MCF 10A (cell line): ENCODE measurements at regions of chr15 and their contacts with region 1.

Region 1: GRCh38 chr15:99704444-99704838 is 28.8 kb downstream of the LYSMD4 start:
- DNase-seq: peak; percentile 88
- H3K4me3 Mint-ChIP-seq: no peak overlapping the region
- H3K27ac Mint-ChIP-seq: peak overlapping the region; percentile 84
- H3K4me1 Mint-ChIP-seq: peaks cover 43% of the 10 kb centered on the region
- H3K27me3 Mint-ChIP-seq: no peaks in the 10 kb centered on the region
- CTCF ChIP-seq: peak; percentile 57

Region 2: GRCh38 chr15:99275525-99276128 is 428.8 kb before region 1 on chr15:
- CTCF ChIA-PET with region 1: interaction called, 37 read pairs
- POLR2A ChIA-PET with region 1: interaction called, 17 read pairs
- intact Hi-C with region 1: loop called (anchors 1 kb)
- DNase-seq: no peak
- H3K4me3 Mint-ChIP-seq: no peak overlapping the region
- H3K27ac Mint-ChIP-seq: no peak overlapping the region
- H3K4me1 Mint-ChIP-seq: no peaks in the 10 kb centered on the region
- H3K27me3 Mint-ChIP-seq: no peaks in the 10 kb centered on the region
- CTCF ChIP-seq: no peak

Region 3: GRCh38 chr15:99296386-99296785 is 408.1 kb before region 1 on chr15:
- CTCF ChIA-PET with region 1: interaction called, 18 read pairs
- POLR2A ChIA-PET with region 1: interaction called, 4 read pairs
- intact Hi-C with region 1: no loop called
- DNase-seq: no peak
- H3K4me3 Mint-ChIP-seq: no peak overlapping the region
- H3K27ac Mint-ChIP-seq: no peak overlapping the region
- H3K4me1 Mint-ChIP-seq: no peaks in the 10 kb centered on the region
- H3K27me3 Mint-ChIP-seq: no peaks in the 10 kb centered on the region
- CTCF ChIP-seq: no peak

Region 4: GRCh38 chr15:99390660-99391059 is 313.8 kb before region 1 on chr15:
- CTCF ChIA-PET with region 1: interaction called, 12 read pairs
- POLR2A ChIA-PET with region 1: no interaction called
- intact Hi-C with region 1: no loop called
- DNase-seq: no peak
- H3K4me3 Mint-ChIP-seq: no peak overlapping the region
- H3K27ac Mint-ChIP-seq: no peak overlapping the region
- H3K4me1 Mint-ChIP-seq: no peaks in the 10 kb centered on the region
- H3K27me3 Mint-ChIP-seq: no peaks in the 10 kb centered on the region
- CTCF ChIP-seq: no peak

Region 5: GRCh38 chr15:99424978-99425656 is 279.3 kb before region 1 on chr15:
- CTCF ChIA-PET with region 1: interaction called, 3 read pairs
- POLR2A ChIA-PET with region 1: no interaction called
- intact Hi-C with region 1: loop called (anchors 5 kb)
- DNase-seq: peak; percentile 90
- H3K4me3 Mint-ChIP-seq: no peak overlapping the region
- H3K27ac Mint-ChIP-seq: peak overlapping the region; percentile 93
- H3K4me1 Mint-ChIP-seq: peaks cover 6% of the 10 kb centered on the region
- H3K27me3 Mint-ChIP-seq: no peaks in the 10 kb centered on the region
- CTCF ChIP-seq: no peak

Region 6: DNA sequence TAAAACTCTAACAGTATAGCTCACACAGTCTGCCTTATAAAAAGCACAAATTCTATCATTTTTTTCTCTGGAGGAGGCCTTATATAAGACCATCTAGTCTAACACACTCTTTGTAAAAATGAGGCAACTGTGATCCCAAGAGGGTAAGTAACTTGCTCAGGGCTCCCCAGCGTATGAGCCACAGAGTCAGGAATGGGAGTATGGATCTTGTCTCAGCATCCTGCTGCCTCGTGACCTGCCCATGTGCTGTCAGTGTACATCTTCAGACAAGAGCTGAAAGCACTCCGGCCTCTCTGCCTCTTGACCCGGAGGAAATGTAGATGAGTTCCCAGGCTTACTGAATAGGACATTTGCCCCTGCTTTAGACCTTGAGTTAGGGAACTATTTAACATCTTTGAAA is 167.1 kb before region 1 on chr15:
- CTCF ChIA-PET with region 1: no interaction called
- POLR2A ChIA-PET with region 1: no interaction called
- intact Hi-C with region 1: no loop called
- DNase-seq: no peak
- H3K4me3 Mint-ChIP-seq: no peak overlapping the region
- H3K27ac Mint-ChIP-seq: no peak overlapping the region
- H3K4me1 Mint-ChIP-seq: peaks cover 10% of the 10 kb centered on the region
- H3K27me3 Mint-ChIP-seq: no peaks in the 10 kb centered on the region
- CTCF ChIP-seq: no peak

Region 7: GRCh38 chr15:99733268-99734039 is 29.0 kb after region 1 on chr15 and contains the start of gene LYSMD4:
- CTCF ChIA-PET with region 1: interaction called, 5 read pairs
- POLR2A ChIA-PET with region 1: interaction called, 53 read pairs
- intact Hi-C with region 1: loop called (anchors 1 kb)
- DNase-seq: peak; percentile 95
- H3K4me3 Mint-ChIP-seq: peak within 1 kb of the TSS; percentile 77
- H3K27ac Mint-ChIP-seq: peak within 1 kb of the TSS; percentile 94
- H3K4me1 Mint-ChIP-seq: peaks cover 14% of the 10 kb centered on the region
- H3K27me3 Mint-ChIP-seq: no peaks in the 10 kb centered on the region
- CTCF ChIP-seq: no peak
- total RNA-seq, gene LYSMD4: 5.7 and 9.0 TPM in 2 replicates